Activated naive CD4-positive, alpha-beta T cell treated with anti-CD3 and anti-CD28 coated beads for 36 hours (primary cell): ENCODE measurements at regions of chr11 and their contacts with region 1.

Region 1: DNA sequence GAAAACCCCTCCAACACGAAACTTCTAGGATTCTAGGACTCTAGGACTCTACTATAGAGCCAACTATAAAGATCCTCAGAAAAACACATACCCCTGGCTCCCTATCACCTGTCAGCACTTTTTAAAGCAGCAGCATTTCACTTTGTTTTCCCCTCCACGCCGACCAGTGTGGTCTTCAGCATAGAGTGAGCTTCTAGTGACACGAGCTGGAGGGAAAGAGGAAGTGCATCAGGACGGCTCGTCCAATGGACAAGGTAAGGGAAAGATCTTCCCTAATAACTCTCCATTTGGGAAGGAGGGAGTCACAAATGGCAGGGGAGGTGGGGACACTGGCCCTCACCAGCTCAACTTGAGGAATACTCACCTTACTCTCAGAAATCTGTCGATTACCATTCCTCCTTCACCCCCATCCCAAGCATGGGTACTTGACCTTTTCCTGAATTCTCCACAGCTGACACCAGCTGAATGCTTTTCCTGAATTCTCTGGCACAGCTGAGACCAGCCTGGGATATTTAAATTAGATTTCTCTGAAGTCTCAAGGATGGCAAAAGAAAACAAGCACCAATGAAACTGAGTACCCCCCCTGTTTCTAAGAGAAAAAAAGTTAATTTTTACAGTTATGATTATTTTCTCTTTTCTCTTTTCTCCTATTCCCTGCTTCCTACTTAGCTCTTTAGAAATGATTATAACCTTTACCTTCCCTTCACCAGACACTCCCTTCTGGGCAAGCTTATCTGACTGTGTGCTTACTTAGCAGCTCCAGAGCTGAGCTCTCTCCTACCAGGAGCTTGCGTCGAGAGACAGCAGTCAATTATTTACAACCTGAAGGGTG is 33.3 kb upstream of the NNMT start:
- DNase-seq: peak; percentile 17
- H3K4me3 Mint-ChIP-seq: no peak overlapping the region
- H3K27ac Mint-ChIP-seq: no peak overlapping the region
- H3K4me1 Mint-ChIP-seq: no peaks in the 10 kb centered on the region
- H3K27me3 Mint-ChIP-seq: no peaks in the 10 kb centered on the region

Region 2: DNA sequence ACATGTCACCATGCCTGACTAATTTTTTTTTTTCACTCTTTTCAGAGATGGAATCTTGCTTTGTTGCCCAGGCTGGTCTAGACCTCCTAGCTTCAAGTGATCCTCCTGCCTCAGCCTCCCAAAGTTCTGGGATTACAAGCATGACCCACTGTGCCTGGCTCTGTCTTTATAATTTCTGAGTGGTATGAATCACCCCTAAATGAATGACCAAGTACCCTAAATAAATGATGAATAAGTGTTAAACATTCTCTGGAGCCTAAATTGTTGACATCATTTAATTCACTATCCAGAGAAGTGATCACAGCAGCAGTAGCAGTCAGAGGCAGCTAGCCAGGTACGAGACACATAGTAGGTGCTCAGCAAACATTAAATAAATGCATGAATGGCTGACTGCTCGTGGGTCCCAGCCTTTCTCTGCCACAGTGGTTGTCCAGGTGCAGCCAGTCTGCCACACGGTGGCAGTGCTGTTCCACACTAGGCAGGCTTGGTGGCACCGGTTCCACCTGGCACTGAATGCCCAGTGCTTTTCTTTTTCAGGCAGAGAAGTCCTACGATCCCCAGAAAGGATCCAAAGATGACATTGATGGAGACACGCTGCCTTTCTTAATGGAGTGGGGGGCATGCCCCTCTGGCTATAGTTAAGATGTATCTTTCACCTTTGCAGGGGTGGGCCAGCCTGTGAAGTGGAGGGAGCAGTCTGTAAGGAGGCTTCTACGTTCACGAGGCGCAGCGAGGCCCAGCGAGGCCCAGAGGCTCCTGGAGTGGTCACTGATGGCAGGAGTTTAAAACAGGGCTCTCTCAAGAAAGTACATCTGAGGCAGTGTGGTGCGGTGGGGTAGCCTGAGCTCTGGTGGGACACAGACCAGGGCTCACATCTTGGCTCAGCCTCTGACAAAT is 957.2 kb before region 1 on chr11:
- CTCF ChIA-PET with region 1: no interaction called
- intact Hi-C with region 1: loop called (anchors 5 kb)
- DNase-seq: peak; percentile 79
- H3K4me3 Mint-ChIP-seq: no peak overlapping the region
- H3K27ac Mint-ChIP-seq: no peak overlapping the region
- H3K4me1 Mint-ChIP-seq: no peaks in the 10 kb centered on the region
- H3K27me3 Mint-ChIP-seq: no peaks in the 10 kb centered on the region

Region 3: DNA sequence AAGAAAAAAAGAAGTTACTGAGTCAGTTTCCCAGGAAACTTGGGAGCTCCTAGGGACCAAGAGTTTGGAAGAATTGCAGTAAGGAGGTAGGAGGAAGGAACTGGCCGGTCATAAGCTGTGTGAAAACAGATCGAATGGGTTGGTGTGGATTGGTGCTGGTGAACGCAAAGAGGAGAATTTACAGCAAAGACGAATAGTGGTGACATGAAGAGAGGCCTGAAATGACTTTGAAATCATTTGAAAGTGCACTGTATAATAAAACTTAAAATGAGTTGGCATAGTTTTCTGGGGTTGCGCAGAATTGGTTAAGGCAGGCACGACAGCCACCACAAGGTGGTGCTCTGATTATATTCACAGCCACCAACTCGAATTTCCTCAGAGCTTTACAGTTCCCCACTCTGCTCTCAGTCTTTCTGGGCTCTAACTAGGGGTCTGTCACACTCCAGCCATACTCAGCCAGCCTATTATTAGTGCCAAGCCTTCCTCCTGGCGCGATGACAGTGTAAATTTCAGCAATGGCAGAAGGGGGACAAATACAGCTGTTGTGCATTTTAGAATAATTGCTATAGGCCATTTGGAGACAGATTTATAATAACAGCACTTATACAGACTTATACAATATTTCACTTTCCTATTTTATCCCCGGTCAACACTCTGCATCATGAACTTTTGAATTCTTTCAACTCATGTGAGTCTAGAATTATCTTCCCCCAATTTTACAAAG is 366.6 kb before region 1 on chr11:
- CTCF ChIA-PET with region 1: interaction called, 108 read pairs
- intact Hi-C with region 1: loop called (anchors 1 kb)
- DNase-seq: peak; percentile 54
- H3K4me3 Mint-ChIP-seq: no peak overlapping the region
- H3K27ac Mint-ChIP-seq: no peak overlapping the region
- H3K4me1 Mint-ChIP-seq: no peaks in the 10 kb centered on the region
- H3K27me3 Mint-ChIP-seq: no peaks in the 10 kb centered on the region

Region 4: GRCh38 chr11:114027926-114028325 is 235.0 kb before region 1 on chr11:
- CTCF ChIA-PET with region 1: interaction called, 74 read pairs
- intact Hi-C with region 1: no loop called
- DNase-seq: no peak
- H3K4me3 Mint-ChIP-seq: no peak overlapping the region
- H3K27ac Mint-ChIP-seq: no peak overlapping the region
- H3K4me1 Mint-ChIP-seq: peaks cover 7% of the 10 kb centered on the region
- H3K27me3 Mint-ChIP-seq: no peaks in the 10 kb centered on the region

Region 5: DNA sequence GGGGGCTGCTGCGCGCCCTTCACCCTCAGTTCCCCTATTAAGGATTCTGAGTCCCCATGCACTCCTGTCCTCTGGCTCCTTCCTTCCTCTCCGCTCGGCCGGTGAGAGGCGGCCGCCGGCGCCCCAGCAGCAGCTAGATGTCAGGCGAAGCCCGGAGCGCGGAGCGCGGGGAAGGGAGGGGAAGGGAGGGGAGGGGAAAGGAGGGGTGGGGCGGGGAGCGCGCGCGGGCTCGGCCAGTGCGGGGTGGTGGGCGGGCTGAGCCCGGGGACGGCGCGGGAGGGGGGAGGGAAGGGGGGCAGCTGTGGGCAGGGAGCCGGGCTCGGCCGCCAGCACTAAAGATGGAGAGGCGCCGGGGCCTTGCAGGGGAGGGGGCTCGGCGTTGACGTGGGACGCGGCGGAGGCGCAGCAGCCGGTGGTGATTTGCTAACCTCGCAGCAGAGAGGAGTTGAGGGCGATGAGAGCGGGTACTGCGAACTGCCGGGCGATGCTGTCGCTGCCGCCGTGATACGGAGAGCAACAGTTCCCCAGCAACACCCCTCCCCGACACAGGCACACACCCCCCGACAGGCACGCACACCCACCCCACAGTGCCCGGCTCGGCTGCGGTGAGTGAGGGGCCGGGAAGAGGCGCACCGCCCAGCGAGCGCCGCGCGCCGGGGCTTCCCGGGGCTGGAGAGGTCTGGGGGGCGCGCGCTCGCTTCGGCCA is 203.5 kb before region 1 on chr11 and contains the start of gene ZBTB16:
- CTCF ChIA-PET with region 1: interaction called, 8 read pairs
- intact Hi-C with region 1: loop called (anchors 1 kb)
- DNase-seq: peak; percentile 76
- H3K4me3 Mint-ChIP-seq: peak within 1 kb of the TSS; percentile 83
- H3K27ac Mint-ChIP-seq: no peak within 1 kb of the TSS
- H3K4me1 Mint-ChIP-seq: peaks cover 8% of the 10 kb centered on the region
- H3K27me3 Mint-ChIP-seq: peaks cover 24% of the 10 kb centered on the region
- total RNA-seq, gene ZBTB16: 1.5 to 2.3 TPM

Region 6: DNA sequence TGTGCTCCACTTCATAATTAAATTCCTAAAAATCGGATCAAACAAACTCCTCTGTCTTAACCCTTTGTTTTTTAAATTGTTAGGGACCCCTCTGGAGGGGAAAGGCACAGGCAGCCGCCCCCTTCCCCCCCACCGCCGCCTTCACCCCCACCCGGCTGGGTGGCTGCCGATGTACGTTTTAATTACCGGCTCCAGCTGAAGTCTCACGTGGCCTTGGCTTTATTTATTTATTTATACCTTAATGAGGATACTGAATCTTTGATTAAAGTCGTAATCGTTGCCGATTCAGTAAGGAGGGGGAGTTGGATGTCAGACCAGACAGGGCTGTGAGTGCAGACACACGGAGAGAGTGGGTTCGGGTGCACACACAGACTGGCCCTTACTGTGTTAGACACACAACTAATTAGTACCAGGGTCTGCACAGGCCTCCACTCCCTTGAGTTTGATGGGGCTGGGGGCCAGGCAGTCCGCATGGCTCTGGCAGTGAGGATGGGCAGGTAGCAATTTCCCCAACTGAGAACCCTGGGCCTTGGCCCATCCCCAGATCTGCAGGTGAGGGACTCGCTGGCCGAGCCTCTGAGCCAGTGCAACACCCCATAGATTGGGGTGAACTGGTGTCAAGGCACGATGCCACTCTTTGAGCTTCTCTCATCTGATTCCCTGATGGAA is 18.0 kb before region 1 on chr11:
- CTCF ChIA-PET with region 1: interaction called, 25 read pairs
- intact Hi-C with region 1: no loop called
- DNase-seq: no peak
- H3K4me3 Mint-ChIP-seq: no peak overlapping the region
- H3K27ac Mint-ChIP-seq: no peak overlapping the region
- H3K4me1 Mint-ChIP-seq: no peaks in the 10 kb centered on the region
- H3K27me3 Mint-ChIP-seq: no peaks in the 10 kb centered on the region